ENCODE measurements at regions of chr20 and their contacts with region 1.

Region 1: GRCh38 chr20:58810116-58810878 is 40.4 kb downstream of the GNAS-AS1 start:
- DNase-seq: no peak
- H3K4me3 ChIP-seq: no peak overlapping the region
- H3K27ac ChIP-seq: no peak overlapping the region
- H3K4me1 ChIP-seq: no peaks in the 10 kb centered on the region; a peak in 1 of 7 replicates
- H3K27me3 ChIP-seq: no peaks in the 10 kb centered on the region
- CTCF ChIP-seq: no peak
- EP300 ChIP-seq: no peak
- POLR2A ChIP-seq: no peak
- RAD21 ChIP-seq: no peak

Region 2: DNA sequence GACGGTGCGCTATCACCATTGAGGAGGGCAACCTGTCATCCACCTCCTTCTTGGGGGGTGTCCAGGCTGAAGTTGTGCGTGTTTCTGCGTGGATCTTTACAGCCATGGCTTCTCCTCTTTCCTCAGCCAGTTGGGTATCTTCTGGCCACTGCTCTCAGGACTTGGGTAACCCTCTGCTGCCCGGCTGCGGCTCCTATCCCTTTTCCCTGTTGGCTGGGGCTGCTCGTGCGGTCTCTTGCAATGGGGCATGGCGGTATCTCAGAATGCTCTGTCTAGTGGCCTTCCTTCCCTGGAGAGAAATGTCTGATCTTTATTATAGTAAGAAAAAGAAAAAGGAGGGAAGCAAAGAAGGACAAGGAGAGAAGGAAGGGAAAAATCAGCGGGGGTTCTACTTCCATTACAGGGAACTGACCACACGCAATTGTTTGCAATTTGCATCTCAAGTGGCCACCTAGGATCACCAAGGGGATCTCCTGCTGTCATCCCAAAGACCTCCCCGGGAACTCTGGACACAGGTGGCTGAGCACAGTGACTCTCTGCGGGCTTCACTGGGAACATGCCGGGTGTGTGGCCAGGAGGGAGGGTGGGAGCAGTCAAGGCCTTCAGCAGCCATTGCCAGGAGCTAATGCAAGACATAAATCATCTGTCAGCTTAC is 56.9 kb before region 1 on chr20:
- CTCF ChIA-PET with region 1: interaction called, 3 read pairs
- POLR2A ChIA-PET with region 1: interaction called, 18 read pairs
- DNase-seq: peak; percentile 54 to 59
- H3K4me3 ChIP-seq: peak overlapping the region in 1 of 4 experiments; percentile 19; a peak in 1 of 8 replicates
- H3K27ac ChIP-seq: no peak overlapping the region
- H3K4me1 ChIP-seq: peaks cover 0 to 27% (median 17%) of the 10 kb centered on the region in 4 experiments; a peak in 6 of 7 replicates
- H3K27me3 ChIP-seq: peaks cover 0 to 37% (median 15%) of the 10 kb centered on the region in 4 experiments; a peak in 5 of 7 replicates
- CTCF ChIP-seq: no peak
- EP300 ChIP-seq: peak in 1 of 2 experiments; percentile 79; a peak in 1 of 3 replicates
- POLR2A ChIP-seq: no peak
- RAD21 ChIP-seq: no peak